ENCODE measurements at regions of chr1 and their contacts with region 1.

Region 1: DNA sequence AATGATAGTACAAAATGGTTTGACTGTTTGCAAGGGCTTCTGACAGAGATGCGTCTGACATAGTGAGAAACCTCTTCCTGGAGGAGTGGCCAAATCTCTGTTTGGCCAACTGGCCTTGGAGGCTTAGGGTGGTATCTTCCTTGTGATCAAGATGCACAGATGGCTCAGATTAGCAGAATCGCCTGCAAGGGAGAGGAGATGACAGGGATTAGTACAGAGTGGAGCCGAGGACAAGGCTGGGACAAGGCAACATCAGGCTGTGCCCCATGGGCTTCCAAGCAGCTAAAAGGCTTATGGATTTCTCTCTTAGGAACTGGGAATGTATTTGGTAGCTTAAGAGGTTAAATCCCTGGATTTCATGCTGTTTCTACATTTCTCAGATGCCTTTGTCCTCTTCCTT is 379.1 kb downstream of the SIPA1L2 start:
- DNase-seq: no peak
- ATAC-seq: no peak

Region 2: DNA sequence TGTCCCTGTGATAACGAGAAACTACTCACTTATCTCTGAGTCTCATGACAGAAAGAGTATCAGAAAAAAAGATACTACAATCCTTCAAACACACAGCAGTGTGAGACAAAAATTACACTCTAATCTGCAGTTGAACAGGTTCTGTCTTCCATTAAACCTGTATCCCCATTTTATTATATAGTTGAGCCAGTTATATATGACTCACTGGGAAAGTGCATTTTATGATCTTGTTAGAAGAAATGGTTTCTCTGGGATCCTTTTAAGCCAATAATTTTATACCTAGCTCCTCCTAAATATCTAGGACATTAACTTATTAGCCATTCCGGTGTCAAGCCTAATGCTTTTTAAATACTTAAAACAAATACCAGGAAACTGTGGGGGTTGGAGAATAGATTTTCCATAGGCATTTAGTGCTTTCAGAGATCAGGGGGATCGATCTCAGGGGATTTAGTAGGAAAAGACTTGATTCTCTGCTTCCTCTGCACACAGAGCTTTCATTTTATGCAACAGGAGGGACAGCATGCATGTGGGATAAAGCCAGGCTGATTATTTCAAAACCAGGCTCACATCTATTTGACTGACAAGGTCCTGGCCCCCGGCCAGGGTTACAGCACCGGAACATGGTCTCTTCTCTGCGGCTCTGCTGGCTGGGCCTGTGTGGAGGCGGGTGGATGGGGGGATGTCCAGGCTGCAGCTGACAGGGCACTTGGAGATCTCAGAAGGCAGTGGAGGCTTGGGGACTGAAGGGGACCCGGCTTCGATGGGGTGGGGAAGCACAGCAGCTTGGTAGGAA is 313.7 kb before region 1 on chr1:
- intact Hi-C with region 1: no loop called
- DNase-seq: peak; percentile 92
- ATAC-seq: peak; percentile 86

Region 3: GRCh38 chr1:232225336-232226131 is 25.3 kb before region 1 on chr1:
- intact Hi-C with region 1: loop called (anchors 1 kb)
- DNase-seq: no peak
- ATAC-seq: no peak

Region 4: DNA sequence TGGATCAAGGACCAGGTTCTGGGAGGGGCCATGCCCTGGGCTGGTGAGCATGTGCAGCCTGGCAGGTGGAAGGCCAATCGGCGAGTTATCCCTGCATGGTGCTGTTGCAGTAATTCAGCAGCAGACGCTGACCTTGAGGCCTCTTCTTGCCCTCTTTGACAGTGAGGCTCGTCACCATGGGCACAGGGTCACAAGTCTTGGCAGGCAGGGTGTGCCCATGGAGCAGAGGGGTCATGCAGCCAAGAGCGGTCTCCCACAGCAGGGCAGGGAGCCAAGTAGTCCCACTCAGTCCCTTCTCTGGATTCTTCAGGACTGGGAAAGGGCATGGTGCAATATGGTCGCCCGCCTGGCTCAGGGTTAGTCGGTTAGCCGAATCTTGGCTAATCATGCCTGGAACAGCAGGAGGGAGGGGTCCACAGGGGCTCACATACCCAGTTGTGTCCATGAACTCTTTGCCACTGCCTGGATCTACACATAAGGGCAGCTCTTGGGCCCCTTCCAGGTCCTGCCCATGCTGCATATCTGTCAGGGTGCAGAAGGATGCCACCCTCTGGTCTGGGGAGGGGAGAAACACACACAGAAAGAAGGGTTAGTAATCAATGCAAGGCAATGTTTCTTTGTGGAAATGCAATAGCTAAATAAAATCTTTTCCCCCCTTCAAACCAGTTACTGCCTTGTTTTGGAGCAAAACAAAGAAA is 152.3 kb after region 1 on chr1:
- intact Hi-C with region 1: no loop called
- DNase-seq: no peak
- ATAC-seq: peak; percentile 40